IMR-90 (cell line): ENCODE measurements at regions of chr4 and their contacts with region 1.

Region 1: DNA sequence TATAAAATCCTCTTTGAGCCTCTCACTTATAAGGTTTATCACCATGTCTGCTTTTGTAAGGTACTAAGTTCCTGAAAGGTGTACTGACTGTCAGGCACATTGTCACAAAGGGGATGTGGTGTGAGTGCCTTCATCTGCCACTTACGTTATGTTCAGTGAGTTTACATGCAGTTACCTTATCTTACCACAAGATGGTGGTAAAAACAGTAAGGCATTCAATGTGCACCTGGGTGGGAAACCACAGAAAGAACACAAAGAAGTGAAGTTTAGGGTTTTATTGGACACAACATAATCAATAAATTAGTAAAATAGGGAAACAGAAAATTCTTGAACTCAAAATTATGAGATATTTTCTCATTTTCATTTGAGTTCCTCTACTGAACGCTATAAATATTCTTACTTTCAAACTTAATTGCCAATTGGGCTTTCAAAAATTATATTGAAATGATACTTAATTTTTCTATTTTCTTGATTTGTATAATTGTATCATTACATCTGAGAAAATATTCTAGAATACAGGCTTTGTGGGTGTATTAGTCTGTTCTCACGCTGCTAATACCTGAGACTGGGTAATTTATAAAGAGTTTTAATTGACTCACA is 650.8 kb downstream of the PCDH7 start:
- DNase-seq: peak; percentile 28
- ATAC-seq: peak; percentile 79
- H3K4me3 ChIP-seq: no peak overlapping the region
- H3K27ac ChIP-seq: no peak overlapping the region
- H3K4me1 ChIP-seq: no peaks in the 10 kb centered on the region
- H3K27me3 ChIP-seq: no peaks in the 10 kb centered on the region
- CTCF ChIP-seq: peak; percentile 57
- POLR2A ChIP-seq: no peak
- RAD21 ChIP-seq: peak; percentile 57

Region 2: DNA sequence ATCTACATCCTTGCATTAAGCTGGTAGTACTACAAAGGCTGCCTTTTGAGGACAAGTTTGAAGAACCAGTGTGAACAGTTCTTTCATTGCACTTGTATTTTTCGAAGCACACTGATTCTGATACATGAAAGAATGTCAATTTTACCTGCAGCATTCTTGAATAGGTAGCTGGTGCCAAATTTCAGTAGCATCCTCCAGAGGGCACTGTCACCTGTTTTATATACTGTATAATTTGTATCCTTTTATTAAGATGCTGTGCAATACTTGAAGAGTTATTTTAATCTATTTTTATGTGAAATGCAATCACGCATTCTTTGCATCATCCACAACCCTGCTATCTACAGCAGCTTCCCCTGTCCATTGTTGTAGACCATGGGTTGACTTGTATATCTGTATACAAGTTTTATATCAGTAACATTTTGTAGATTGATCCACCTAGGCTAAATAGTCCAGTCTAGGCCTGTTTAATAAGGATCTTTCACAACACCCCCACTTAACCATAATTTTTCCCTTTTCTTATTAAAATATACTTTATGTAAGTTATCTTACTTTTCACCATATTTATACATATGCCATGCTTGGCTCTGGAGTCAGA is 325.1 kb before region 1 on chr4:
- CTCF ChIA-PET with region 1: no interaction called
- POLR2A ChIA-PET with region 1: no interaction called
- dilution Hi-C with region 1: no loop called
- in situ Hi-C with region 1: no loop called
- intact Hi-C with region 1: loop called (anchors 2 kb)
- DNase-seq: peak; percentile 24
- ATAC-seq: peak; percentile 42; the same call in 1 of the 2 replicates
- H3K4me3 ChIP-seq: no peak overlapping the region
- H3K27ac ChIP-seq: no peak overlapping the region
- H3K4me1 ChIP-seq: no peaks in the 10 kb centered on the region
- H3K27me3 ChIP-seq: no peaks in the 10 kb centered on the region
- CTCF ChIP-seq: peak; percentile 46
- POLR2A ChIP-seq: no peak
- RAD21 ChIP-seq: peak; percentile 52

Region 3: DNA sequence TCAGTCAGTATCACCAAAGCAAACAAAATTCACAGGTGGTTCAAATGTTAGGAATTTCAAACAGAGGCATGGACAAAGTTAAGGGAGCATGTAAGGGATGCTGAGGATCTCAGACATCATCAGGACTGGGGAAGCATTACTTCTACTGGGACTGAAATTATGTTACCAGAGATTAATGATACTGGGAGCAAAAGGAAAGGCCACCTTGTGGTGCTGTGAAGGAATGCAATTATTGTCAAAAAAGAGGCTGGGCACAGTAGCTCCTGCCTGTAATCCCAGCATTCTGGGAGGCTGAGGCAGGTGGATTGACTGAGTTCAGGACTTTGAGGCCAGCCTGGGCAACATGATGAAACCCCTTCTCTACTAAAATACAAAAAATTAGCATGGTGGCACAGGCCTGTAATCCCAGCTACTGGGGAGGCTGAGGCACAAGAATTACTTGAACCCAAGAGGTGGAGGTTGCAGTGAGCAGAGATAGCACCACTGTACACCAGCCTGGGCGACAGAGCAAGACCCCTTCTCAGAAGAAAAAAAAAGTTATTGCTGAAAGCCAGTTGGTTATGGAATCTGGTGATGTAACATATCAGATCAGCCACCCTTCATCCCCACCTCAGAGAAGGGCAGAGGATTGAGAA is 303.5 kb after region 1 on chr4:
- CTCF ChIA-PET with region 1: no interaction called
- POLR2A ChIA-PET with region 1: no interaction called
- dilution Hi-C with region 1: no loop called
- in situ Hi-C with region 1: no loop called
- intact Hi-C with region 1: loop called (anchors 2 kb)
- DNase-seq: peak; percentile 8
- ATAC-seq: peak; percentile 70
- H3K4me3 ChIP-seq: no peak overlapping the region
- H3K27ac ChIP-seq: no peak overlapping the region
- H3K4me1 ChIP-seq: no peaks in the 10 kb centered on the region
- H3K27me3 ChIP-seq: no peaks in the 10 kb centered on the region
- CTCF ChIP-seq: peak; percentile 45
- POLR2A ChIP-seq: no peak
- RAD21 ChIP-seq: peak; percentile 48

Region 4: GRCh38 chr4:31692402-31692940 is 321.5 kb after region 1 on chr4:
- CTCF ChIA-PET with region 1: no interaction called
- POLR2A ChIA-PET with region 1: no interaction called
- dilution Hi-C with region 1: no loop called
- in situ Hi-C with region 1: no loop called
- intact Hi-C with region 1: loop called (anchors 1 kb)
- DNase-seq: no peak
- ATAC-seq: 0 out of 2 replicates have a peak, but pooled peaks have one; percentile 29
- H3K4me3 ChIP-seq: no peak overlapping the region
- H3K27ac ChIP-seq: no peak overlapping the region
- H3K4me1 ChIP-seq: no peaks in the 10 kb centered on the region
- H3K27me3 ChIP-seq: no peaks in the 10 kb centered on the region
- CTCF ChIP-seq: 0 out of 2 replicates have a peak, but pooled peaks have one; percentile 21
- POLR2A ChIP-seq: no peak
- RAD21 ChIP-seq: 0 out of 2 replicates have a peak, but pooled peaks have one; percentile 17